K562 (cell line): ENCODE measurements at regions of chr17 and their contacts with region 1.

Region 1: DNA sequence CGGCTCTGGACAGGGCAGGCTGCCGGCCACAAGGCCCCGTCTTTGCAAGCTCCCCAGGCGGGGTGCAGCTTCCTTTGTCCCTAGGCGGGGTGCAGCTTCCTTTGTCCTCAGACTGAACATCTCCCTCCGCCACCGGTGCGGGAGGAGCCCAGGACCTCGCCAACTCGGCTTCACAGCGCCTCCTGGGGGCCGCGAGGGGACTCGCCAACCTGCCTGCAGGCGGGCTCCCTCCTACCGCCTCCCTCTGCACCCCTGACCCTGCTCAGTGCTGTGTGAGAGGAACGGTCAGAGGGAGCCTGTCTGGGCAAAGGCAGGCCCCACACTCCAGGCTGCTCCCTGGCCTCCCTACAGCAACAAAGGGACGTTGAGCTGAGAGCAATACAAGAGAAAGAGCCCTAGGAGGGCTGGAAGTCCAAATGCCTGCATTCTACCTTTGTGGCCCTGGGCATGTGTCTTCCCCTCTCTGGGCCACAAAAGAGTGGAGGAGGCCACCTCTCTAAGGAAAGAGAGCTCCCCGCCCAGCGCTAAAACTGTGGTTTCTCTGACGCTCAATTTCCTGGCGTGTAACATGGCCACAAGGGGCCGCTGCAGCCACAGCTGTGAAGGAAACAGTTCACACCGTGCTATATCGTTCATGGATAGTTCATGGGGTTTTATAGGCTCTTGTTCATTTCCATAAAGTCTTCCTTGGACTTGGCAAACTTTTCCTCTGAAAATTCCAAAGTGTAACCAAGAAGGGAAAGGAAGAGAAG is 20.9 kb upstream of the KRT19 start:
- DNase-seq: peak; percentile 91 to 92 (median 91)
- ATAC-seq: peak; percentile 97
- H3K4me3 ChIP-seq: no peak overlapping the region
- H3K27ac ChIP-seq: peak overlapping the region; percentile 56; the same call in 2 of the 3 replicates
- H3K4me1 ChIP-seq: peaks cover 31 to 34% of the 10 kb centered on the region in 2 experiments
- H3K27me3 ChIP-seq: peaks cover 0 to 4% of the 10 kb centered on the region in 2 experiments; a peak in 1 of 5 replicates
- CTCF ChIP-seq: peak; percentile 93 to 95 (median 95); a peak in 5 of 6 replicates
- EP300 ChIP-seq: no peak
- POLR2A ChIP-seq: no peak
- RAD21 ChIP-seq: peak; percentile 89 to 95

Region 2: DNA sequence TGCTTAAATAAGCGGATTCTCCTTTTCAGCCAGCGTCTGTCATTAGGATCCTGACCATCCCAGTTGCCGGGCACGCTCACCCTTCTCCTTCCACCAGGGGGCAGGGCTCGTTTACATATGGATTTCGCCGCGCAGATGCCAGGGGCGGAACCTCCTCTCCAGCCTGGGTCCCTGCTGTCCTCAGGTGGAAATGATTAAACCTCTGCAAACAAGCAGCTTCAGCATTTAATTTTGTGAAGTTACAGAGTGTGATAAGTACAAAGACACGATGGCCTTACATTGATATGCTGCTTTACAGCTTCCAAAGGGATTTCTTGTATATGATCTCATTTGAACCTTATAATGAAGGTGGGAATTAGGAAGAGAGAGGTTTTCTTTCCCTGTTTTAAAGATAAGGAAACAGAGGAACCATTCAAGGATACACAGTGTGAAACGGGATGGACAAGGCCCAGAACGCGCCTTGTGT is 745.4 kb before region 1 on chr17:
- CTCF ChIA-PET with region 1: interaction called, 10 read pairs
- POLR2A ChIA-PET with region 1: no interaction called
- in situ Hi-C with region 1: loop called (anchors 5 kb)
- intact Hi-C with region 1: loop called (anchors 2 kb)
- DNase-seq: peak; percentile 85 to 88 (median 86)
- ATAC-seq: peak; percentile 98
- H3K4me3 ChIP-seq: no peak overlapping the region
- H3K27ac ChIP-seq: no peak overlapping the region
- H3K4me1 ChIP-seq: no peaks in the 10 kb centered on the region
- H3K27me3 ChIP-seq: peaks cover 3 to 14% of the 10 kb centered on the region in 2 experiments; a peak in 4 of 5 replicates
- CTCF ChIP-seq: peak; percentile 90 to 93 (median 93)
- EP300 ChIP-seq: no peak
- POLR2A ChIP-seq: no peak
- RAD21 ChIP-seq: peak; percentile 90 to 96

Region 3: GRCh38 chr17:41486809-41487720 is 62.0 kb before region 1 on chr17:
- CTCF ChIA-PET with region 1: interaction called, 14 read pairs
- POLR2A ChIA-PET with region 1: interaction called, 9 read pairs
- in situ Hi-C with region 1: loop called (anchors 5 kb)
- intact Hi-C with region 1: loop called (anchors 1 kb)
- DNase-seq: peak; percentile 70 to 86 (median 82)
- ATAC-seq: peak; percentile 94
- H3K4me3 ChIP-seq: no peak overlapping the region
- H3K27ac ChIP-seq: no peak overlapping the region
- H3K4me1 ChIP-seq: peaks cover 9 to 22% of the 10 kb centered on the region in 2 experiments; a peak in 4 of 5 replicates
- H3K27me3 ChIP-seq: peaks cover 7 to 33% of the 10 kb centered on the region in 2 experiments; a peak in 3 of 5 replicates
- CTCF ChIP-seq: peak; percentile 84 to 91 (median 89)
- EP300 ChIP-seq: no peak
- POLR2A ChIP-seq: no peak
- RAD21 ChIP-seq: peak; percentile 67 to 88

Region 4: DNA sequence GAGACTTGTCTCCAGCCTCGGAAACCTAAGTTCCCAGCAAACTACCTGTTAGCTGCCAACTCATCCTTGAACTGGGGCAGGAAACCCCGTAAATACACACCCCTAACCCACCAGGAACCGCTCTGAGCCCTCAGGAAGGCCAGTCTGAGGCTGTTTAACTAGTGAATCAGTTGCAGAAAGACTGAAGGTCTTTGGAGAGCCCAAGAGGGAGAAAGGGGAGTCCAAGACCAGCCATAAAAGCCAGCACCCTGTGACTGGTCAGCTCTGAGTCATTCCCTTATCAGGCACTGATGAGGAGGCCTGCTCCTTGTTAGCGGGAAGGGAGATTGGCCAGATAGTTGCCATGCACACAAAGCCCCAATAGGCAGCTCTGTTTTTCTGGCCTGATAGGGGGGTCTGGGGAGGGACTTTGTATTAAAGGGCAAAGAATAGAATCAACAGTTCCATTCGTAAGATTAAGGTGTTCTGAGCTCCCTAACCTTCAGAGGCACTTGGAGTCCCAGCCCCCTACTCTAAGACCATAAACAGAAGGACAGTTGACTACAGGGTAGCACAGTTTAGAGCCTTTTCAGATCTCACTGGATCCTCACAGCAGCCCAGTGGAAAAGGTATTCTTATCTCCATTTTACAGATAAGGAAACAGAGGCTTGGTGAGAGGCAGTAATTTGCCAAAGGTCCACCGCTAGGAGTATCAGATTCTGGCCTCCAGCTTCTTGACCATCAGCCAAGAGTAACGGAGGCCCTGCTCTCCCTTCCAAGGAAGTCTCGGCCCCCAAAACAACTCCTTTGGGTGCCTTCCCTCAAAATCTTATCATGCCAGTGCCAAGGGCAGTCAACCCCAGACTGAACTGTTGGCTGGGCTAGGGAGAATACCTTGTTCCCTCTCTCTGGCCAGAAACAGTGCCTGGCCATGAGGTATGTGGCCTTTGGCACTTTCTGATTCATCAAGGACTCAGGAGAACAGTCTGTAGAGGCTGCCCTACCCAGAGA is 18.7 kb before region 1 on chr17:
- CTCF ChIA-PET with region 1: interaction called, 6 read pairs
- POLR2A ChIA-PET with region 1: interaction called, 12 read pairs
- in situ Hi-C with region 1: no loop called
- intact Hi-C with region 1: no loop called
- DNase-seq: peak; percentile 88 to 96 (median 90)
- ATAC-seq: peak; percentile 76
- H3K4me3 ChIP-seq: peak overlapping the region; percentile 11
- H3K27ac ChIP-seq: peak overlapping the region; percentile 94
- H3K4me1 ChIP-seq: peaks cover 45 to 58% of the 10 kb centered on the region in 2 experiments
- H3K27me3 ChIP-seq: no peaks in the 10 kb centered on the region
- CTCF ChIP-seq: no peak; a peak in 1 of 6 replicates
- EP300 ChIP-seq: peak; percentile 89
- POLR2A ChIP-seq: no peak; the same call in 1 of the 2 replicates
- RAD21 ChIP-seq: 0 out of 4 replicates have a peak, but pooled peaks of 1 of the 2 experiments have one; percentile 5

Region 5: DNA sequence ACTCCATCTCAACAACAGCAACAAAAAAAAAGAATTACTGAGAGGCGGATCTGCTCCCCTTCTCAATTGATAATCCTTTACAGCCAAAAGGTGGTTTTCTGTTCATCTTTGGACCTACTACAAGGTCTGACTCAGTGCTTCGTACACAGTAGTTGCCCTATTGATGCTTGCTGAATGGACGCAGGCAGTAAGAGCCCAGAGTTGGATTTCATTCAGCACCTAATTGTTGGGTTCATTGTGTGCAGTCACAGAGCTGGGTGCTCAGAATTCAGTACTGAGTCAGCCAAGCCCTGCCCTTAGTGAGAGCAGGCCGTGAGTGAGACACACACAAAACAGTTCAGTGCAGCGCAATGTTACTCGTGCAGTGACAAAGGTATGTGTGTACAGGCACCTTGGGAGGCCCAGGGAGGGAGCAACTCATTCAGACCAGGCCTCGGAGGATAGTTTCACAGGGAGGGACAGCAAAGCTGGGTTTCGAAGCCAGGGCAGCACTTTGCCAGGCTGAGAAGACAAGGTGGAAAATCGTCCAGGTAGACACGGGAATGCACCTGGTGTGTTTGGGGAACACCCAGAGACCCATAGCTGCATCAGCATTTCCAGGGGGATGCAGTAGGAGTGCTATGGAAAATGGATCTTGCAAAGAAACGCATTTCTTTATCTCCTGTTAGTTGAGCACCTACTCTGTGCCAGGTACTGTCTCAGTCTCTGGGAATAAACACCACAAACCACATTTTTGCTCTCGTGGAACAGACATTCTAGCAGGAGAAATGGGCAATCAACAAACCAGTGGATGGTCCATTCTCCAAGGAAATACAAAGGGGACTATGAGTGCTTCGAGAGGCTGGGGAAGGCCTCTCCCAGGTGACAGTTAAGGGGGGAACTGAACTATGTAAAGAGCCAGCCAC is 93.5 kb after region 1 on chr17:
- CTCF ChIA-PET with region 1: interaction called, 80 read pairs
- POLR2A ChIA-PET with region 1: interaction called, 4 read pairs
- in situ Hi-C with region 1: loop called (anchors 5 kb)
- intact Hi-C with region 1: no loop called
- DNase-seq: no peak
- ATAC-seq: no peak
- H3K4me3 ChIP-seq: no peak overlapping the region
- H3K27ac ChIP-seq: no peak overlapping the region
- H3K4me1 ChIP-seq: peaks cover 6 to 11% of the 10 kb centered on the region in 2 experiments; a peak in 4 of 5 replicates
- H3K27me3 ChIP-seq: peaks cover 0 to 12% of the 10 kb centered on the region in 2 experiments; a peak in 2 of 5 replicates
- CTCF ChIP-seq: no peak
- EP300 ChIP-seq: no peak
- POLR2A ChIP-seq: no peak
- RAD21 ChIP-seq: no peak